ENCODE measurements at regions of chr13 and their contacts with region 1.

Region 1: GRCh38 chr13:26062844-26063444 is 11.1 kb upstream of the SHISA2 start:
- DNase-seq: peak in 4 of 10 donors; percentile 34 to 85 (median 56)

Region 2: DNA sequence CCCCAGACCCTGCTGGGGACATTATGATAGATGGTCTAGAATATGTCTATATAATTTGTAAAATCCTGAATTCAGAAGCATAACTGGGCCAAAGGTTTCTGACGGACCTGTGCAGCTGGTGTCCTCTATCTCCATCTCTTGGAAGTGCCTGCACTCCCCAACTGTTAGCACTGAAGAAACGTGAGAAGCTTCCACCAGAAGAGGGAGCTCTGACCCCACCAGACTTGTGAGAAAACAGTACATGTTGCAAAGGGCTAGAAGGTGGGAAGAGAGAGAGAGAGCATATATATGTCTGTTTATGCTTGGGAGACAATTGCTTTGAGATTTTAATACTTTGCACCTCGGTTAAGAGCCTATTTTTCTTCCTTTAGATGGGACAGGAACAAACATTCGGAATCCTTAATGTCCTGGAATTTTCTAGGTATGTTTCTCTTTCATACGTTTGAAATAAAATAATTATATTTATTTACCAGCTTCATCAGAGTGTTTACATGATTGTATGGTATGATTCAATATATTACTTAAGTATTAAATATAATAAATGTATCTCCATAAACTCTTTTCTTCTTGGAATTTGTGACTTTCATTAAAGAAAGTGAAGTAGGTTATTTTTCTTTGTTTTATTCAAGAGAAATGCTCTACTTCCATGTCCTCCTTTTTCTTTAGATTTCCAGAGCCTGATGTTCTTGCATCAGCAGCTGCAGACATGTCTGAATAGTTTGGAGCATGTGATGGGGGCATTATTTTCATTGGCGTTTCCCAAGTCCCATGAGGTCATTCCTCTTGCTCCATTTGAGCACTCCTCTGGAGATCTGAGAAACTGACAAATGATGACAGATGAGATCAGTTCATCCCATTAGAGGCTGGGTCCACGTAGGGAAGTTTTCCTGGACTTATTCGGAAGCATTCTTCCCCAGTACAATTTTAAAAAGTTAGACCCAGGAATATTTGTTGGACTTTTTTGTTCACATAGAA is 488.2 kb before region 1 on chr13:
- intact Hi-C with region 1: loop called (anchors 2 kb)
- DNase-seq: peak; percentile 41 to 96 (median 86)

Measured in posterior cingulate gyrus (tissue), 11 donors.